ENCODE measurements at regions of chr5 and their contacts with region 1.

Region 1: DNA sequence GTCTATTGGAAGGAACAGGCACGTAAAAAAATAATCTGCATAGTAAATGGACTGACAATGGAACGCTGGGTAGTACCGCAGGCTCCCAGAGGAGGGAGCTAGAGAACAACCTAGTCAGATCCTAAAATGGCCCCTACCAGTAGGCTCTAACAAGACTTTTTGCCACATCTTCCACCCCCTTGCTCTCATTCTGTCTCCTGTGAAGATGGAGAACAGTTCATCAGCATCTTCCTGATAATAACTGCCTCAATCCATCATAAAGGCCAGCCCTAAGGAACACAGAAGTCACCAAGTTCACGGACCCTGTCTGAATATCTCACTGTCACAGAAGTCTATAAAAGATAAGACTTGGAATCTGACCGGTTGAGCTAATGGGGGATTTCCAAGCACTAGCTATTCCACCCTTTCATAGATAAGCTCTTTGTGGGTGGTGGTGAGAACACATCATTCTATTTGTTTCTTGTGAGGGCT is 133.4 kb downstream of the SLC1A3 start:
- DNase-seq: peak; percentile 67 to 71
- H3K4me3 ChIP-seq: no peak overlapping the region
- H3K27ac ChIP-seq: no peak overlapping the region
- H3K4me1 ChIP-seq: peaks cover 0 to 16% (median 9%) of the 10 kb centered on the region in 4 donors
- H3K27me3 ChIP-seq: peaks cover 0 to 21% of the 10 kb centered on the region in 2 donors
- CTCF ChIP-seq: peak; percentile 41 to 52

Region 2: GRCh38 chr5:36866174-36866573 is 126.4 kb after region 1 on chr5:
- intact Hi-C with region 1: loop called (anchors 10 kb)
- DNase-seq: no peak
- H3K4me3 ChIP-seq: no peak overlapping the region
- H3K27ac ChIP-seq: no peak overlapping the region
- H3K4me1 ChIP-seq: no peaks in the 10 kb centered on the region
- H3K27me3 ChIP-seq: no peaks in the 10 kb centered on the region
- CTCF ChIP-seq: no peak

Measured in tibial artery (tissue), 4 donors.